Lower leg skin (tissue), 4 donors: ENCODE measurements at regions of chr18 and their contacts with region 1.

Region 1: DNA sequence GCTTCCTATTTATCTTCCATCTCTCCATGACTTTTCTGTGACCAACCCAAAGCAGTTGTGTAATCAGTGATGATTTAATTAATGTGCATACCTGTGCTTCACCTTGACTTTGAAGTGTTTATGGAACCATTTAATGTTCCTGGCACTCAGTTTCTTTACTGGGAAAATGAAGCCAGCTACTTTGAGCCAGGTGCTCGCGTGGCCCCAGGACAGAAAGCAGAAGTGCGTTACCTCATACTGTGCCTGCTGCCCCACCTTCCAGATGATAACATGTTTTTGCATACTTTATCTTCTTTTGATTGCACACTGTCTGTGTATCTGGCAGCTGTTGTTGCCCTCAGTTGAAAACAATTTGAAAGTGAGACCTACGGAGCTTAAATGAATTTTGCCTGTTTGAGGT is 61.3 kb downstream of the PMAIP1 start:
- DNase-seq: peak in 1 of 2 donors; percentile 50
- H3K4me3 ChIP-seq: no peak overlapping the region
- CTCF ChIP-seq: no peak
- POLR2A ChIP-seq: no peak

Region 2: DNA sequence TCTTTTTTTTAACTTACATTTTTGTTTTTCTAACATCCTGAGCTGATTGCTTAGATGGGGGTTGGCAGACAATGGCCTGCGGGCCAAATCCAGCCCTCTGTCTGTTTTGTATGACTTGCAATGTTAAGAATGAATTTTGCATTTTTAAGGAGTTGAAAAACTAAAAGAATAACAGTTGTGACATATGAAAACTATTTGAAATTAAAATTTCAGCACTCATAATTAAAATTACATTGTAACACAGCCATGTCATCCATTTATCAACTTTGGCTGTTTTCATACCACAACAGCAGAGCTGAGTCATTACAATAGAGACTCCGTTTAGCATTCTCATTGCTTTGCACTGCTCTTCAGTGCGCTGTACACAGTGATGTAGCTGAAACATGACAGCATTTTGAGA is 505.6 kb after region 1 on chr18:
- intact Hi-C with region 1: loop called (anchors 5 kb)
- DNase-seq: no peak
- H3K4me3 ChIP-seq: no peak overlapping the region
- CTCF ChIP-seq: no peak
- POLR2A ChIP-seq: no peak